ENCODE measurements at regions of chr15 and their contacts with region 1.

Region 1: DNA sequence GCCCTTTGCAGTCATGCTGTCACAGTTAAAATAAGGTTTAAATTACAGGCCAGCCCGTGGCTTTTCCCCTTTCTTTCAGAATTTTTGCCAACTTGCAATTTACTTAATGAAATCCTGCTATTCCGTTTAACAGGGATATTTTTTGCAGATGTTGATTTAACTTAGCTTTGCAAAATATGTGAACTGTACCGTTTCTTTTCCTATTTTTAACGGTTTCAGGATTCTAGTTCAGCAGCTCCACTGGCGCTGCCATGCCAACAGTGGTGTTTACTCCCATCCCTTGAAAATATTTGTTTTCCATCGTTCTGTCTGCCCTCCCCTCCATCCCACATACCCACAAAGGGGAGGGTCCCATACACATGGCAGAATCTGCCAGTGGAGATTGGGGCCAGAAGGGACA is 54.3 kb downstream of the SMAD6 start:
- DNase-seq: no peak
- ATAC-seq: no peak
- H3K4me3 ChIP-seq: no peak overlapping the region
- H3K27ac ChIP-seq: no peak overlapping the region
- H3K4me1 ChIP-seq: peaks cover 14 to 88% (median 58%) of the 10 kb centered on the region in 9 donors
- H3K27me3 ChIP-seq: no peaks in the 10 kb centered on the region
- CTCF ChIP-seq: no peak

Region 2: DNA sequence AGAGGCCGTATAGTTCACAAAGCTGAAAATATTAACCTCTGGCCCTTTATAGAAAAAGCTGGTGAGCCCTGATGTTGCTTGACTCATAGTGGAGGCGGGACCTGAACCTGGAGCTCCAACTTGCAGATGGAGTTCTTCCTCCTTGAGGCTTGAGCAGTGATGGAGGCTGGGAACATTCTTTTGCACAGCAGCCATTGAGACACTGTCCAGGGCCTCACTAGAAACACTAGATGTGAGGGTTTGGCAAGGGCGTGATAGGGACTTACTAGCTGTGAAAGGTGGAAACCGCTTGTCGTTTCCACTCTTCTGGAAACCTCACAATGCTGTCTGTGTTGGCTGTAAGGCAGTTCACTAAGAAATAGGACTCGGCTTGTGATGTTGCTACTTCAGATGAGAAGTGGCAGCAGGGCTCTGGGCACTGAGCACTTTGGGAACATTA is 41.7 kb before region 1 on chr15:
- intact Hi-C with region 1: loop called in 2 of 10 experiments (anchors 5 to 10 kb)
- DNase-seq: no peak
- ATAC-seq: no peak
- H3K4me3 ChIP-seq: no peak overlapping the region
- H3K27ac ChIP-seq: no peak overlapping the region
- H3K4me1 ChIP-seq: peaks cover 2 to 77% (median 31%) of the 10 kb centered on the region in 9 donors
- H3K27me3 ChIP-seq: no peaks in the 10 kb centered on the region
- CTCF ChIP-seq: no peak